Psoas muscle (tissue), 8 donors: ENCODE measurements at regions of chr5 and their contacts with region 1.

Region 1: DNA sequence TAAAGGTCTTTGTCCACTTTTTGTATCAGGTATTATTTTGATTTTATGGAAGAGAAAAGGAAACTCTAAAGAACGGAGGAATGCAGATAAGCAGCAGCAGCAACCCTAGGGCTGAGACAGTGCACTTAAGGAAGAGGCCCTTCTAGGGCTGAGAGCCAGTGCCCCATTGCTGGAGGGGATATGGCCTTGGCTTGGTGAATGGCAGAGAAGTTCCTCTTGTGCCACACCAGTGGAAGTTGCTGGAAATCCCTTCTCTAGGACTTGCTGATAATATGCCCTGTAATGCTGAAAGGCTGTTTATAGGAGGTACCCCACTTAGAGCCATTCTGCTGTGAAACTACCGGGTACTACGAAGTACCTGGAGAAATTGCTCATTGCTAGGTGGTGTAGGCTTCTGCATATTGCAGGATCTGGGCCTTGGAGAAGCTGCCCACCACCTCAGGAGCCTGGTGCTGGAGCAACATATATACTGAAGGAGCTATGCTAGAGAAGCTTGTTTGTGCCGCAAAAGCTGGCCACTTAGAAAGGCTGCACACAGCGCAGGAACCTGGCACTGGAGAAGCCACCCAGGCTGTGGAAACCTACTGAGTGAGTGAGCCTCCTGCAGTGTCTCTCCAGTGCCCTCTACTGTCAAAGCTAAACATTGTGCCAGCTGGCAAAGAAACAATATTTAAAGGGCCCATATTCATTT is 9.6 kb upstream of the UBTD2 start:
- DNase-seq: peak; percentile 60 to 71
- ATAC-seq: peak; percentile 95 to 100 (median 99)
- H3K4me3 ChIP-seq: no peak overlapping the region
- H3K27ac ChIP-seq: no peak overlapping the region
- H3K4me1 ChIP-seq: no peaks in the 10 kb centered on the region
- H3K27me3 ChIP-seq: no peaks in the 10 kb centered on the region
- CTCF ChIP-seq: peak; percentile 81

Region 2: DNA sequence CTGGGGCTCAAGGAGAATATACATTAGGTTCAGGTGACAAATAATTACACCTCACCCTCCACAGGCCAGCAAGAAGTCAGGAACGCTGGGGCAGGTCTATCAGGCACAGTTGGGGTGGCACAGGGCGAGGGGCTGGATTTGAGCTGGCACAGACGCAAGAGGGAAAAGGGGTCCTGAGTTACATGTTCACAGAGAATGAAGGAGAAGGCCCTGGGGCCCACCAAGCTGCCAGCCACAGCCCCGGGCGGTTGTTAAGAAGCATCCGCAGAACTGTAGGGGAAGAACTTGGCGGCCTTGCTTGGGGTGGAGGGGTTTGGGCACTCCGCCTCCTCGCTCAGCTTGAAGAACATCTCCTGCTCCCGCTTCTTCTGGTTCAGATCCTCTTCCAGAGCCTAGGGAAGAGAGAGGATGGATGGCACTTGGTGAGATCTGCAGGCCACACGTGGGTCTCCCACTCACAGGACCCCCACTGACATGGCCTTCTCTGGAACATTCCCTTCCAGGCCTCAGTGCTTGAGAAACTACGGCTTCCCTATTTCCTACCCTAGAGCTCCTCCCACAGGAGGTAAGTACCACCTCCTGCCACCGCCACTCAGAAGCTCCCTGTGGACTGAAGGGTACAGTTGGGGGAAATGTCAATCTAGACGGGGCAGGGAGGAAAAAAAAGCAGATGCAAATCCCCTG is 248.4 kb before region 1 on chr5:
- intact Hi-C with region 1: no loop called
- DNase-seq: no peak
- ATAC-seq: no peak
- H3K4me3 ChIP-seq: no peak overlapping the region
- H3K27ac ChIP-seq: no peak overlapping the region
- H3K4me1 ChIP-seq: peaks cover 5% of the 10 kb centered on the region
- H3K27me3 ChIP-seq: no peaks in the 10 kb centered on the region
- CTCF ChIP-seq: no peak

Region 3: GRCh38 chr5:172106511-172107356 is 186.5 kb before region 1 on chr5:
- intact Hi-C with region 1: loop called in 1 of 2 experiments (anchors 2 kb)
- DNase-seq: peak; percentile 57 to 72
- ATAC-seq: peak; percentile 42 to 81 (median 56)
- H3K4me3 ChIP-seq: peak overlapping the region; percentile 47
- H3K27ac ChIP-seq: no peak overlapping the region
- H3K4me1 ChIP-seq: peaks cover 14% of the 10 kb centered on the region
- H3K27me3 ChIP-seq: no peaks in the 10 kb centered on the region
- CTCF ChIP-seq: peak; percentile 92

Region 4: DNA sequence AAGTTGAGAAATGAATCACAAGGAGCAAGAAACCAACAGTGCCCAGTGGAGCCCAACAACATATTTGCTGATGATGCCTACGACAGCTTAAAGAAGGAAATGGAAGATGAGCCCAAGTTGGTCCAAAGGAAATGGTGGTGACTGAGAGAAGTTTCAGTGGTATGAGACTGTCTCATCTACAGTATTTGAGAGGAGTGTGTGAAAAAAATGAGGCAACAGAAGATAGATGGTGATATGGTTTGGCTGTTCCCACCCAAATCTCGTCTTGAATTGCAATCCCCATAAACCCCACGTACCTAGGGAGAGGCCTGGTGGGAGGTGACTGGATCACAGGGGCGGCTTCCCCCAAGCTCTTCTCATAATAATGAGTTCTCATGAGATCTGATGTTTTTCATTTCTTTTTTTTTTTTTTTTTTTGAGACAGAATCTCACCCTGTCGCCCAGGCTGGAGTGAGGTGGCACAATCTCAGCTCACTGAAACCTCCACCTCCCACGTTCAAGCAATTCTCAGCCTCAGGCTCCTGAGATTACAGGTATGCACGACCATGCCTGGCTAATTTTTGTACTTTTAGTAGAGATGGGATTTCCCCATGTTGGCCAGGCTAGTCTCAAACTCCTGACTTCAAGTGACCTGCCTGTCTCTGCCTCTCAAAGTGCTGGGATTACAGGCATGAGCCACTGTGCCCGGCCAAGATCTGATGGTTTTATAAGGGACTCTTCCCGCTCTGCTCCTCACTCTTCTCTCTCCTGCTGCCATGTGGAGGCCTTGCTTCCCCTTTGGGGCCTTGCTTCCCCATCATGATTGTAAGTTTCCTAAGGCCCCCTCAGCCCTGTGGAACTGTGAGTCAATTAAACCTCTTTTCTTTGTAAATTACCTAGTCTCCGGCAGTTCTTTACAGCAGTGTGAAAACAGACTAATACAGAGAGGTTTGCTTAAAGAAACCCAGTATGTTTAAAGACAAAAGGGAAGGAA is 69.0 kb before region 1 on chr5:
- intact Hi-C with region 1: loop called in 1 of 2 experiments (anchors 10 kb)
- DNase-seq: no peak
- ATAC-seq: no peak
- H3K4me3 ChIP-seq: no peak overlapping the region
- H3K27ac ChIP-seq: no peak overlapping the region
- H3K4me1 ChIP-seq: no peaks in the 10 kb centered on the region
- H3K27me3 ChIP-seq: no peaks in the 10 kb centered on the region
- CTCF ChIP-seq: no peak

Region 5: GRCh38 chr5:172255444-172255843 is 37.8 kb before region 1 on chr5:
- intact Hi-C with region 1: no loop called
- DNase-seq: no peak
- ATAC-seq: no peak
- H3K4me3 ChIP-seq: no peak overlapping the region
- H3K27ac ChIP-seq: no peak overlapping the region
- H3K4me1 ChIP-seq: peaks cover 3% of the 10 kb centered on the region
- H3K27me3 ChIP-seq: no peaks in the 10 kb centered on the region
- CTCF ChIP-seq: no peak